Naive thymus-derived CD4-positive, alpha-beta T cell (primary cell): ENCODE measurements at regions of chr1 and their contacts with region 1.

Region 1: GRCh38 chr1:85148524-85149250 is 52.1 kb downstream of the SYDE2 start:
- DNase-seq: no peak
- ATAC-seq: no peak
- H3K4me3 ChIP-seq: no peak overlapping the region
- H3K4me3 Mint-ChIP-seq: peak overlapping the region in 1 of 10 donors; percentile 27
- H3K27ac ChIP-seq: no peak overlapping the region
- H3K27ac Mint-ChIP-seq: peak overlapping the region in 1 of 9 donors; percentile 47
- H3K4me1 ChIP-seq: no peaks in the 10 kb centered on the region
- H3K4me1 Mint-ChIP-seq: peaks cover 0 to 34% (median 0%) of the 10 kb centered on the region in 7 donors
- H3K27me3 ChIP-seq: no peaks in the 10 kb centered on the region
- H3K27me3 Mint-ChIP-seq: peaks cover 0 to 2% (median 0%) of the 10 kb centered on the region in 5 donors

Region 2: DNA sequence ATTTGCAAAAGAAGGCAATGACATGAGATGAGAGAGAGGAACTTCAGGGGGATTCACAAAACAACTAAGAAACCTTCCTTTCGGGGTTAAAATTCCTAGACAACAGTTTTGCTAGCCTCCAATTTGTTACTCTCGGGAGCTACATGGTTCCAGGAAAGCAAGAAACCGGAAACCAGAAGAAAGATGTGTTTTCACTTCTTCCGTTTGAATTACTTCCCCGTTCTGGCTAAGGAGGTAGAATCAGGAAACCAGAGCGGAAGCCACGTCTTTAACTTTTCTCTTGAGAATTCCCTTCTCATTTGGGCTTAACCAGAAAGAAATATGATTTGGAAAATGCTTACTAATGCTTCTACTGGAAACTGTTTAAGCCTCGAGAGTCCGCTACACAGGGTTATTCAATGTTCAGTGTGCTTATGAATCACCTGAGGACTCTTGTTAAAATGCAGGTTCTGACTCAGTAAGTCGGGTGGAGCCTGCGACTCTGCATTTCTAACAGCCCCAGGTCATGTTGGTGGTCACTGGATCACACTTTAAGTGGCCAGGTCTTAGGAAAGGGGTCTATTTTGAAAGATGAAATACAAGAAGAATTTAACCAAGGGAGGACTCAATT is 56.9 kb before region 1 on chr1:
- CTCF ChIA-PET with region 1: no interaction called
- POLR2A ChIA-PET with region 1: no interaction called
- intact Hi-C with region 1: loop called in 1 of 2 experiments (anchors 2 kb)
- DNase-seq: peak in 1 of 9 donors; percentile 7
- ATAC-seq: no peak
- H3K4me3 ChIP-seq: peak overlapping the region; percentile 35
- H3K4me3 Mint-ChIP-seq: peak overlapping the region; percentile 39 to 79 (median 58)
- H3K27ac ChIP-seq: no peak overlapping the region
- H3K27ac Mint-ChIP-seq: peak overlapping the region in 7 of 9 donors; percentile 15 to 72 (median 50)
- H3K4me1 ChIP-seq: peaks cover 0 to 6% of the 10 kb centered on the region in 2 donors
- H3K4me1 Mint-ChIP-seq: peaks cover 2 to 12% (median 8%) of the 10 kb centered on the region in 7 donors
- H3K27me3 ChIP-seq: no peaks in the 10 kb centered on the region
- H3K27me3 Mint-ChIP-seq: peaks cover 0 to 41% (median 12%) of the 10 kb centered on the region in 5 donors

Region 3: GRCh38 chr1:85179522-85179921 is 30.8 kb after region 1 on chr1:
- CTCF ChIA-PET with region 1: no interaction called
- POLR2A ChIA-PET with region 1: no interaction called
- intact Hi-C with region 1: loop called in 1 of 2 experiments (anchors 1 kb)
- DNase-seq: peak in 7 of 9 donors; percentile 34 to 67 (median 61)
- ATAC-seq: peak; percentile 85
- H3K4me3 ChIP-seq: peak overlapping the region; percentile 7
- H3K4me3 Mint-ChIP-seq: peak overlapping the region; percentile 8 to 86 (median 70)
- H3K27ac ChIP-seq: peak overlapping the region; percentile 25
- H3K27ac Mint-ChIP-seq: peak overlapping the region; percentile 6 to 93 (median 55)
- H3K4me1 ChIP-seq: peaks cover 6 to 10% of the 10 kb centered on the region in 2 donors
- H3K4me1 Mint-ChIP-seq: peaks cover 10 to 24% (median 17%) of the 10 kb centered on the region in 7 donors
- H3K27me3 ChIP-seq: no peaks in the 10 kb centered on the region
- H3K27me3 Mint-ChIP-seq: no peaks in the 10 kb centered on the region

Region 4: DNA sequence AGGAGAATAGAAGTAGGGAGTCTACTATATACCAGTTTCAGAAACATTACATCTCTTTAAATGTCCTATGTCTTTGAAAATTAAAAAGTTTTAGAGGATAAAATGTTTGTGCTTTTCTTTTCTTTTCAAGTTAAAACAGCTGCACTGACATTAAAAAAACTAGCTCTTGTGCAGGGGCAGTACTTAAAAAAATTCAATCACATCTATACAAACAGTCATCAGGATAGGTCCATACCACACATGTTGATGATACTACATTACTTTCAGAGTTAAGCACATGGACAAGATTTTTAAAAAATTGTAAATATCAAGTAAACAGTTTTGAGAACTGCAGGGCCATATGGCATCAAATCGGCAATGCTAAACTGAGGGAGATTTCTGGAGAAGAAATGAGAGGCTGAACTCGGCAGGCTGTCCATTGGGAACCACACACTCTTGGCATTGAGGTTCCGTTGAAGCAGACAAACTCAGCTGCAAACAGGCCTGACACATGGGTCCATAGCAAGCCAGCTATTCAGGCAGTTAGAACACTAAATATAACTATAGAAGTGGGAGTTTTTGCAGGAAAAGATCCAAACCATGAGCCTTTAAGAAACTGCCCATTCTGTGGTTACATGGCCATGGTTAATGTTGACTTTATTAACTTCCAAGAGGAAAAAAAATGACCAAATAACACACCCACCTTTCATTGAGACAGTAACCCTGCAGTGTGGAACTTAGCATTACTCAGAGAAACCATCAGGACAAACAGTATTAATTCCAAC is 212.2 kb after region 1 on chr1:
- CTCF ChIA-PET with region 1: no interaction called
- POLR2A ChIA-PET with region 1: no interaction called
- intact Hi-C with region 1: no loop called
- DNase-seq: no peak
- ATAC-seq: no peak
- H3K4me3 ChIP-seq: no peak overlapping the region
- H3K4me3 Mint-ChIP-seq: no peak overlapping the region
- H3K27ac ChIP-seq: no peak overlapping the region
- H3K27ac Mint-ChIP-seq: no peak overlapping the region
- H3K4me1 ChIP-seq: no peaks in the 10 kb centered on the region
- H3K4me1 Mint-ChIP-seq: no peaks in the 10 kb centered on the region
- H3K27me3 ChIP-seq: no peaks in the 10 kb centered on the region
- H3K27me3 Mint-ChIP-seq: peaks cover 0 to 19% (median 0%) of the 10 kb centered on the region in 5 donors

Region 5: GRCh38 chr1:85448358-85448757 is 299.7 kb after region 1 on chr1:
- CTCF ChIA-PET with region 1: no interaction called
- POLR2A ChIA-PET with region 1: no interaction called
- intact Hi-C with region 1: no loop called
- DNase-seq: no peak
- ATAC-seq: no peak
- H3K4me3 ChIP-seq: no peak overlapping the region
- H3K4me3 Mint-ChIP-seq: no peak overlapping the region
- H3K27ac ChIP-seq: no peak overlapping the region
- H3K27ac Mint-ChIP-seq: no peak overlapping the region
- H3K4me1 ChIP-seq: no peaks in the 10 kb centered on the region
- H3K4me1 Mint-ChIP-seq: no peaks in the 10 kb centered on the region
- H3K27me3 ChIP-seq: no peaks in the 10 kb centered on the region
- H3K27me3 Mint-ChIP-seq: peaks cover 2 to 31% (median 15%) of the 10 kb centered on the region in 5 donors

Region 6: GRCh38 chr1:85865213-85865612 is 716.5 kb after region 1 on chr1:
- CTCF ChIA-PET with region 1: no interaction called
- POLR2A ChIA-PET with region 1: no interaction called
- intact Hi-C with region 1: no loop called
- DNase-seq: no peak
- ATAC-seq: no peak
- H3K4me3 ChIP-seq: no peak overlapping the region
- H3K4me3 Mint-ChIP-seq: no peak overlapping the region
- H3K27ac ChIP-seq: no peak overlapping the region
- H3K27ac Mint-ChIP-seq: no peak overlapping the region
- H3K4me1 ChIP-seq: no peaks in the 10 kb centered on the region
- H3K4me1 Mint-ChIP-seq: no peaks in the 10 kb centered on the region
- H3K27me3 ChIP-seq: no peaks in the 10 kb centered on the region
- H3K27me3 Mint-ChIP-seq: peaks cover 0 to 7% (median 0%) of the 10 kb centered on the region in 5 donors